Vagina (tissue), 2 donors: ENCODE measurements at regions of chr3 and their contacts with region 1.

Region 1: DNA sequence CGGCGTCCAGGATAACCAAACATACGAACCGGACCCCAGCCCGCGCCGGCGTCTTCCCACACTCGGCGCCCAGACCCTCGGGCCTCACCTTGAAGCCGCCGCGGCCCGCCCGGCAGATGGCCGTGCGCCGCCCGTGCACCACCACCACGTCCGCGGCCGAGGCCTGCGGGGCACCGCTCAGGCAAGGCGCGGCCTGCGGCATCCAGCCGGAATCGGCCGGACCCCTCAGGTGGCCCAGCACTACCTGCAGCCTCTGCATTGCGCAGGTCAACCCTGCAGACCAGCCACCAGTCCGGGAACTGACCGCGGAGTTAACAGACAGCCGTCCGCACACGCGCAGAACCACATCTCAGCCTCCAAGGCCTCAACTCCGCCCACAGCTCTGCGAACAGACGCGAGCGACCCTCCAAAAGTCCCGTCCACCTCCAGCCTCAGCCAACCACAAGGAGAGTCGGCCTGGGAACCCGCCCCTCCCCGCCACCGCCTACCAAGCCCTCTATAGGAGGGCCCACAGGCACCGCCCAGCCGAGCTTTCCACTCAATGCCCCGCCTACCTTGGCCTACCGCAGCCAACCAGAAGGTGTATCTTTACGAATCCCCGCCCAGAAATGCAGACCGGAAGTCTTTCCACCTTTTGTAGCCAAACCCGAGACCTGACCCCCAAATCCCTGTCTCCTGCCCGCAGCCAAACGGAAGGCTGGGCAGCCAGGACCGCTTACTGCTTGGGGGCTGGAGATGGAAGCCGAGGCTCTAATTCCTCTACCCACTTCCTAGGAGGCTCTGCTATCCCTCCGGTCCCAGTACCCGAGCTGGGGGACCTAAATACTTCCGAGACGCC is at the start of gene ACAA1:
- DNase-seq: peak; percentile 98 to 100
- H3K4me3 ChIP-seq: peak within 1 kb of the TSS; percentile 80 to 85
- H3K27ac ChIP-seq: peak within 1 kb of the TSS; percentile 92
- H3K4me1 ChIP-seq: peaks cover 61% of the 10 kb centered on the region
- H3K27me3 ChIP-seq: no peaks in the 10 kb centered on the region
- CTCF ChIP-seq: peak in 1 of 3 experiments; percentile 36
- POLR2A ChIP-seq: peak in 1 of 2 donors; percentile 91
- total RNA-seq, gene ACAA1: 53.0 TPM

Region 2: DNA sequence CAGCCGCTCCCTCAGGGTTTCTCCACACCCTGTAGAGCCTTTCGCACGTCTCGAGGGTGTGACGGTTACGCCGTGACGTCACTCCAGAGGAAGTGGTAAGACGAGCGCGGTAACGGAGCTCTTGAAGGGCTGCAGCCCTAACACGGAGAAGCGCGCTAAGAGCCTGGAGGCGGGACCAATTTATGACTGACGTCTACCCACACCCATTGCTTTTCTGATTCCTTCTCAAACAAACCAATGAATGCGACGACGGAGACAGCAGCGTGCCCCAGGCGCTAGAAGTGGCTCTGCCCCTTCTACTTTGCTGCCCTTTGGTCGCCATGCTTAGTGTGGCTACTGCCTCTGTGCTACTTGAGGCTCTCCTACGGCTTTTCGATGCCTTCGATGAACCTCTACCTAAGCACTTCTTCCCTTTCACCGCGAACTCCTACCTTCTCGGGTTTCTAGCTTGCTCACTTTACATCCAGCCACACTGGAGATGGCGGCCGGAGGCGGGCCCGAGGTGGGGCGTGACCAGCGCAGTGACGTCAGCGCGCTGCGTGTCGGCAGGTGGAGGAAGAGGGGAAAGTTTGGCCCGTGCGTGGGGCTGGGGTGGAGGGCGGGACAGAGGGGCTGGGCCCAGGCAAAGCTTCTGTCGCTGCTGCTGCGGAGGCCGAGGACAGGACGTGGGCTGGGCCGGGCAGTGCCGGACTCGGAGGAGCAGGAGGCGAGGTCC is 28.1 kb after region 1 on chr3 and contains the start of gene OXSR1:
- intact Hi-C with region 1: loop called (anchors 1 kb)
- DNase-seq: peak in 1 of 2 donors; percentile 100
- H3K4me3 ChIP-seq: peak within 1 kb of the TSS; percentile 82 to 97
- H3K27ac ChIP-seq: peak within 1 kb of the TSS; percentile 98
- H3K4me1 ChIP-seq: peaks cover 44% of the 10 kb centered on the region
- H3K27me3 ChIP-seq: no peaks in the 10 kb centered on the region
- CTCF ChIP-seq: no peak
- POLR2A ChIP-seq: peak in 1 of 2 donors; percentile 87
- total RNA-seq, gene OXSR1: 22.8 TPM

Region 3: GRCh38 chr3:38346587-38347410 is 209.8 kb after region 1 on chr3 and contains the start of gene XYLB:
- intact Hi-C with region 1: loop called (anchors 10 kb)
- DNase-seq: no peak
- H3K4me3 ChIP-seq: peak within 1 kb of the TSS; percentile 71 to 91
- H3K27ac ChIP-seq: peak within 1 kb of the TSS; percentile 72
- H3K4me1 ChIP-seq: peaks cover 10% of the 10 kb centered on the region
- H3K27me3 ChIP-seq: no peaks in the 10 kb centered on the region
- CTCF ChIP-seq: peak; percentile 84 to 98 (median 89)
- POLR2A ChIP-seq: no peak
- total RNA-seq, gene XYLB: 3.4 TPM

Region 4: DNA sequence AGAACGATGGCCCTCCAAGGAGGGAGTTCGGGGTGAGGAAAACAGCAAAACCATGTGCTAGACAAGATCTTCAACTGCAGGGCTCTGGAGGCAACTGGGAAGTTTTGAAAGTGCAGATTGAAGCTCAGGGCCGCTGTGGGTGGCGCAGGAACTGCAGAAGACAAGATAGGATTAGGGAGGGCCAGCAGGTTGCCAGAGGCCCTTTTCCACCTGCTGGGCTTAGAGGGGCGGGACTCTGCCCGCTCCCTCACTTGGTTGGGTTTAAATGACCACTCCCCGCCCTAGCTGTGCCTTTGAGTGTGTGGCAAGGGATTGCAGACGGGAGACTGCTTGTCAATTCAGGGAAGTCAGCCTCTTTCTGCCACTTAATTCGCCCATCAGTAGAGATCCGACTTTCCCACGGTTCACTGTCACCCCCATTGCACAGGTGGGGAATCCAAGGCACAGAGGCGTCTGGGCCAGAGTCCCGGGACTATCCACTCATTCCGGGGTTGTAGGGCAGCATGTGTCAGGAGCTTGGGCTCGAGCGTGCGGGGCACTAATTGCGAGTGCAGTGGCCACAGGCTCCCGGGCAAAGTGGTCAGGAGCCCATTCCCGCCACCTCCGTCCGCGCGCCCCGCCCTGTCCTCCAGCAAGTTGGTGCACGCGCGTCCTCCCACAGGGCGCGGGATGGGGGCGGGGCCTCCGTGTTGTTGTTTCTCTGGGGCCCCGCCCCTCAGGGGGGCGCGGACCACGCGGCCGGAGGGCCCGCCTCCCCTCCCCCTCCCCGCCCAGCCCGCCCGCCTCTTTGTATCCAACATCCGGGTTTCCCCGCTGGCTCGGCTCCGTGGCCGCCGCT is 316.3 kb after region 1 on chr3 and contains the start of gene ACVR2B:
- intact Hi-C with region 1: loop called (anchors 10 kb)
- DNase-seq: no peak
- H3K4me3 ChIP-seq: peak within 1 kb of the TSS; percentile 80 to 92
- H3K27ac ChIP-seq: peak within 1 kb of the TSS; percentile 86
- H3K4me1 ChIP-seq: peaks cover 39% of the 10 kb centered on the region
- H3K27me3 ChIP-seq: no peaks in the 10 kb centered on the region
- CTCF ChIP-seq: no peak
- POLR2A ChIP-seq: no peak
- total RNA-seq, gene ACVR2B: 3.7 TPM